Body of pancreas (tissue), 4 donors: ENCODE measurements at regions of chr3 and their contacts with region 1.

Region 1: DNA sequence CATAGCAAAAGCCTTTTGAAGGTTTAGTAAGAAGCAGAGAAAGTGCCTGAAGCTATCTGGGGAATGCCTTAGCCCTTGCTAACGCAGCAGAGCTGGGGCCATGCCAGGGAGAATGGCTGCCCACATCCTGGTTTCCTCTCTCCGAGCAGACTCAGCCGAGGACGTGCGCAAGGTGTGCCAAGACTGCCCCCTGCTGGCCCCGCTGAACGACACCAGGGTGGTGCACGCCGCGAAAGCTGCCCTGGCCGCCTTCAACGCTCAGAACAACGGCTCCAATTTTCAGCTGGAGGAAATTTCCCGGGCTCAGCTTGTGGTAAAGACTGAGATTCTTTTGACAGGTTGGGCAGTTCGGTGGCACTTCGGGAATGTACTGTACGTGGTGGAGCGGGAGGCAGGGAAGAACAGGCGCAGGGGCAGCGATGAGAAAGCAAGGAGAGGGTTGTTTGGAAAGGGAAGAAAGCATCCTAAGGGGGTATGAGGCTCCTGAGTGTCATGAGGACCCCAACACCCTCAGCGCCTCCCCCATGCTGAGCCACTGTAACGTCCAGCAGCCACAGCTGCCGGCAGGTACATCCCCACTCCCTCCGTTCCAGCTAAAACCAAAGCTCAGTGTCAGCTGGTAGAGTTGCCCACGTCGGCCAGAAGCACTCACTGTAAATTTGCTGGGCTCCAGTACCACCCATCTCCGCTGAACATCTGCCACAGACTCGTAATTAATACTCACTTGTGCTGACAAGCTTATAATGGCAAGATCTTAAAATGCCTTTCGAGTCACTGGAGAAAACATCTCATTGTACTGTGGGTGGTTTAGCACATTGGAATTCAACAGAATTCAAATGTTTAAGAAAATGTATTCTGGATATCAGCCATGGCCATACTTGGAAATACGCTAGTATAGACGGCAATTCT is 4.4 kb downstream of the AHSG start:
- DNase-seq: peak; percentile 91 to 95 (median 94)
- ATAC-seq: peak; percentile 99
- H3K4me3 ChIP-seq: no peak overlapping the region
- H3K27ac ChIP-seq: peak overlapping the region in 1 of 4 donors; percentile 29
- H3K4me1 ChIP-seq: peaks cover 7% of the 10 kb centered on the region
- H3K27me3 ChIP-seq: no peaks in the 10 kb centered on the region
- CTCF ChIP-seq: peak; percentile 91 to 97 (median 94)
- POLR2A ChIP-seq: no peak

Region 2: DNA sequence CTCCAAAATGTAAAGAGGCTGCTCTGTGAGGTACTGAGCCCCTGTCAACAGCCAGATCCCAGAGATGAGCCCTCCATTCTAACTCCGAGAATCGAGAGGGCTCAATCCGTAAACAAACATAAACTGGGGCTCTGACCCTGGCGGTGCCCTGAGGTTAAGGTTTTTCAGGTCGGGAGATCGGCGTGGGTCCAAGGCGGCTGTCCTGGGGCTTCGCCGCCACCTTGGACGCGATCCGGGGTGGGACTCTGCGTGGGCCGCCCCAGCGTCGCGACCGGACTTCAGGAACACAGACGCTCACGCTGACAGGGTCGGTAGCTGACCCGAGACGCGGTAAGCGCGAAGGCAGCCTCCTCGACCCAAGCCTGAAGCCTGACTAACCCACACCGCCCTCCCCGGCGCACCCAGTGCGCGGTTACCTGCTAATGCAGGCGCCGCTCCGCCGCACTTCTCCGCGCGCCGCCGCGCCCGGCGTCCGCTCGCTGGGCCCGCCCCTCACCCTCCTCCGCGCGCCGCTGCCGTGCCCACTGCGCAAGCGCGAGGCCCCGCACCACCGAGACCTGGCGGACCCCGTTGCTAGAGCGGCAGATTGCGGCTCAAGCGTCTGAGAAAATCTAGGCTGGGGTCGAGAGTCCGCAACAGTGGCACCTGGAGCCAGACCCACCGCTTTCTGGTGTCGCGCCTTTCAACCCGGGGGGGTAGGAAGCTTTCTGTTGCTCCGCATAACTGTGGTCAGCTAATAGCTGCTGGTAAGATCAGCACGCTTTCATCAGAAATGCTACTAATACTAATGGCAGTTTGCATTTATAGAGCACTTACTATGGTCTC is 50.2 kb before region 1 on chr3 and contains the start of gene TBCCD1:
- intact Hi-C with region 1: loop called (anchors 10 kb)
- DNase-seq: peak; percentile 93 to 95 (median 94)
- ATAC-seq: peak; percentile 74
- H3K4me3 ChIP-seq: peak within 1 kb of the TSS; percentile 68 to 89
- H3K27ac ChIP-seq: peak within 1 kb of the TSS; percentile 54 to 89 (median 86)
- H3K4me1 ChIP-seq: peaks cover 44% of the 10 kb centered on the region
- H3K27me3 ChIP-seq: no peaks in the 10 kb centered on the region
- CTCF ChIP-seq: peak in 1 of 7 experiments; percentile 16
- POLR2A ChIP-seq: peak; percentile 96 to 97 (median 96)
- total RNA-seq, gene TBCCD1: 4.0 to 14.0 TPM

Region 3: DNA sequence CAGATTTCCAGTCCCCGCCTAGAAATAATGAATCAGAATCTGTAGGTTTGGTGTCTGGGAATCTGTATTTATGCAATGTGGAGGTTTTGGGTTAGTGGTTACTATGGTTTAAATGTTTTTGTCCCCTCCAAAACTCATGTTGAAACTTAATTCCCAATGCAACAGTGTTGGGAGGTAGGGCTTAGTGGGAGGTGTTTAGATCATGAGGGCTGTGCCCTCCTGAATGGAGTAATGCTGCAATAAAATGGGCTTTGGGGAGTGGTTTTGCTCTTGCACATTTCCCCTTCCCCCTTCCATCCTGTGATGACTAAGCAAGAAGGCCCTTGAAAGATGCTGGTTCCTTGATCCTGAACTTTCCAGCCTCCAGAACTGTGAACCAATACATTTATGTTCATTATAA is 198.1 kb after region 1 on chr3:
- intact Hi-C with region 1: loop called (anchors 10 kb)
- DNase-seq: no peak
- ATAC-seq: no peak
- H3K4me3 ChIP-seq: no peak overlapping the region
- H3K27ac ChIP-seq: no peak overlapping the region
- H3K4me1 ChIP-seq: no peaks in the 10 kb centered on the region
- H3K27me3 ChIP-seq: peaks cover 0 to 6% of the 10 kb centered on the region in 2 donors
- CTCF ChIP-seq: no peak
- POLR2A ChIP-seq: no peak